Endothelial cell of umbilical vein (primary cell): ENCODE measurements at regions of chr1 and their contacts with region 1.

Region 1: GRCh38 chr1:21909787-21910503 is 27.2 kb downstream of the HSPG2 start:
- DNase-seq: peak; percentile 96
- H3K4me3 ChIP-seq: no peak overlapping the region
- H3K27ac ChIP-seq: peak overlapping the region; percentile 94
- H3K4me1 ChIP-seq: peaks cover 95% of the 10 kb centered on the region
- H3K27me3 ChIP-seq: no peaks in the 10 kb centered on the region
- CTCF ChIP-seq: no peak
- POLR2A ChIP-seq: peak; percentile 88

Region 2: GRCh38 chr1:21924503-21925005 is 14.6 kb after region 1 on chr1:
- CTCF ChIA-PET with region 1: interaction called, 7 read pairs
- POLR2A ChIA-PET with region 1: interaction called, 15 read pairs
- dilution Hi-C with region 1: no loop called
- intact Hi-C with region 1: loop called (anchors 1 kb)
- DNase-seq: peak; percentile 99
- H3K4me3 ChIP-seq: no peak overlapping the region
- H3K27ac ChIP-seq: peak overlapping the region; percentile 79
- H3K4me1 ChIP-seq: peaks cover 92% of the 10 kb centered on the region
- H3K27me3 ChIP-seq: no peaks in the 10 kb centered on the region
- CTCF ChIP-seq: no peak
- POLR2A ChIP-seq: peak; percentile 84

Region 3: GRCh38 chr1:22039594-22040285 is 129.8 kb after region 1 on chr1:
- CTCF ChIA-PET with region 1: no interaction called
- POLR2A ChIA-PET with region 1: no interaction called
- dilution Hi-C with region 1: no loop called
- intact Hi-C with region 1: no loop called
- DNase-seq: peak; percentile 44
- H3K4me3 ChIP-seq: no peak overlapping the region
- H3K27ac ChIP-seq: peak overlapping the region; percentile 10
- H3K4me1 ChIP-seq: peaks cover 11% of the 10 kb centered on the region
- H3K27me3 ChIP-seq: no peaks in the 10 kb centered on the region
- CTCF ChIP-seq: no peak
- POLR2A ChIP-seq: no peak